ENCODE measurements at regions of chr6 and their contacts with region 1.

Region 1: GRCh38 chr6:1609648-1610496 is at the start of gene FOXC1:
- DNase-seq: peak; percentile 94
- H3K4me3 Mint-ChIP-seq: peak within 1 kb of the TSS; percentile 92
- H3K27ac Mint-ChIP-seq: peak within 1 kb of the TSS; percentile 84
- H3K4me1 Mint-ChIP-seq: no peaks in the 10 kb centered on the region
- H3K27me3 Mint-ChIP-seq: no peaks in the 10 kb centered on the region
- CTCF ChIP-seq: no peak
- total RNA-seq, gene FOXC1: 16.7 and 16.8 TPM in 2 replicates

Region 2: DNA sequence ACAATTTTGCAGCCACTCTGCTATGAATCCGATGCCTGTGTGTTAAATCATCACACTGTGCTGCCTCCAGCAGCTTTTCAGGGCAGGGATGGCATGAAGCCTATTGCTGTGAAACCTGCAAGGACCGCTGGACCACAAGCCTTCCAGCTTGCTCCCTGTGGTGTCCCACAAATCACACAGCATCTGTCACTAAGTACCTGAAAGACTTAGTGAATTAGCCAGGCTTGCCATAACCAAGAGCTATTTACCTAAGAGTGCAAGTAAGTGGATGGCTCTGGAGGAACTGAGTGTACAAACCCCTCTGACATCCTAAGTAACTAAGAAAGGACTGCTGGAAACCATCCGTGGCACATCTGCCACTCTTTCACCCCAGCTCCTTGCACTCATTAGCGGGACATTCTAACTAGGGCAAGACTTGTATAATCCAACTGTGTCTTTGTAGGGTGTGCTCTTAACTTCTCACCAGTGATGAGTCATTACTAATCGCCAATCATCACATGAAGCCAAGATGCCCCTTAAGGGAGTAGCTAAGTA is 263.2 kb before region 1 on chr6:
- CTCF ChIA-PET with region 1: no interaction called
- POLR2A ChIA-PET with region 1: no interaction called
- intact Hi-C with region 1: no loop called
- DNase-seq: no peak
- H3K4me3 Mint-ChIP-seq: no peak overlapping the region
- H3K27ac Mint-ChIP-seq: no peak overlapping the region
- H3K4me1 Mint-ChIP-seq: peaks cover 13% of the 10 kb centered on the region
- H3K27me3 Mint-ChIP-seq: no peaks in the 10 kb centered on the region
- CTCF ChIP-seq: no peak

Region 3: DNA sequence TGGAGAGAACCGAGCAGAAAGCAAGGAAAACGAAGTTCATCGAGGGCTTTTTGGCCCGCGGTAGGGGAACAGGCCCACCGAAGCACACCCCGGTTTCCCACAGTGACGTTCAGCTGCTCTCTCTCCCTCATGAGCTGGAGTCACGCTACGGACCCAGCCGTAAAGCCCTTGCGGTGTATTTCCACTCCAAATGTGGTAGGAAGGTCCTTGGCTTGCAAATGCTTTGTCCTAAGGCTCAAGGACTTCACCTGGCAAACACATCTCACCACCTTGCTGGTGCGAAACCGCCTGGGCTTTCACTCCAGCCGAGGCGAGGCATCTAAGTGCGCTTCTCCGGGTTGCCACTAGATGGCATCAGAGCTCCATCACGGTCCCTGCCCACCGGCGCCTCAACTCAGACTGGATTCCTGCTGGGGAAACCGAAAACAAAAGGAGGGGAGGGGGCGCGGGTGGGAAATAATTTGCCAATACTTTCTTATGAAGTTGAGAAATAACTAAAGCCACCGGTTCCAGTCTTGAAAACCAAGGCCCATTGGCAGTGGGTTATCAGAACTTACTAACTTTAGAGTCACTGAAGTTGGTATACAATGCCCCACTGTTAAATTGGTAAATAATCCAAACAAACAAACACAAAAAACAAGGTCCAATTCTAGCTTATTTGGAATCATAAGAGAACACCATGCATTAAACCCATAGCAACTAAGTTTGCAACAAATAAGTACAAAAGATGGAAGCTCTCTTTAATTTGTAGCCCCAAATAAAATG is 13.6 kb before region 1 on chr6:
- CTCF ChIA-PET with region 1: interaction called, 12 read pairs
- POLR2A ChIA-PET with region 1: interaction called, 10 read pairs
- intact Hi-C with region 1: no loop called
- DNase-seq: peak; percentile 55
- H3K4me3 Mint-ChIP-seq: no peak overlapping the region
- H3K27ac Mint-ChIP-seq: no peak overlapping the region
- H3K4me1 Mint-ChIP-seq: peaks cover 28% of the 10 kb centered on the region
- H3K27me3 Mint-ChIP-seq: peaks cover 21% of the 10 kb centered on the region
- CTCF ChIP-seq: peak; percentile 93

Region 4: DNA sequence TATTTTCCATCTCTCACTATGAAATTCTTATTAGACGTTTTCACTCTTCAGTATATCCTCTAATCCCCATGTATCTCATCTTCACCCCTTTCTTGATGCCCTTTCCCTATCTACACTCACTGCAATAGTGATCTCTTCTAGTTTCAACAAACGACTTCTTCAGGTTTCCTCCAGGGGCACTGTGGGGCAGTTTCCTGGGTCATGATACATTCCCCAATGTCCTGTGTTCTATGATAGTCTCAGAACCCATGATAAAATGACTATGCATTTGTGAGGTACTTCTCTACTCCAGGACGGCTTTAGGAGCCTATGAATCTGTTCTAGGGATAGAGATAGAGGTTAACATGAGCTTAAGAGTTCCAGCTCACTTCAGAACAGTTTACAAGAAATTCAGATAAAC is 183.1 kb after region 1 on chr6:
- CTCF ChIA-PET with region 1: no interaction called
- POLR2A ChIA-PET with region 1: no interaction called
- intact Hi-C with region 1: loop called (anchors 5 kb)
- DNase-seq: peak; percentile 62
- H3K4me3 Mint-ChIP-seq: no peak overlapping the region
- H3K27ac Mint-ChIP-seq: no peak overlapping the region
- H3K4me1 Mint-ChIP-seq: peaks cover 3% of the 10 kb centered on the region
- H3K27me3 Mint-ChIP-seq: no peaks in the 10 kb centered on the region
- CTCF ChIP-seq: peak; percentile 33

Region 5: GRCh38 chr6:2021713-2022125 is 411.8 kb after region 1 on chr6:
- CTCF ChIA-PET with region 1: interaction called, 3 read pairs
- POLR2A ChIA-PET with region 1: interaction called, 10 read pairs
- intact Hi-C with region 1: no loop called
- DNase-seq: peak; percentile 89
- H3K4me3 Mint-ChIP-seq: no peak overlapping the region
- H3K27ac Mint-ChIP-seq: no peak overlapping the region
- H3K4me1 Mint-ChIP-seq: peaks cover 21% of the 10 kb centered on the region
- H3K27me3 Mint-ChIP-seq: no peaks in the 10 kb centered on the region
- CTCF ChIP-seq: no peak

Region 6: GRCh38 chr6:2097464-2097863 is 487.6 kb after region 1 on chr6:
- CTCF ChIA-PET with region 1: interaction called, 8 read pairs
- POLR2A ChIA-PET with region 1: interaction called, 68 read pairs
- intact Hi-C with region 1: no loop called
- DNase-seq: no peak
- H3K4me3 Mint-ChIP-seq: no peak overlapping the region
- H3K27ac Mint-ChIP-seq: no peak overlapping the region
- H3K4me1 Mint-ChIP-seq: peaks cover 12% of the 10 kb centered on the region
- H3K27me3 Mint-ChIP-seq: no peaks in the 10 kb centered on the region
- CTCF ChIP-seq: no peak